Activated naive CD4-positive, alpha-beta T cell treated with anti-CD3 and anti-CD28 coated beads for 36 hours (primary cell): ENCODE measurements at regions of chr22 and their contacts with region 1.

Region 1: GRCh38 chr22:41381329-41382097 is at the start of gene TEF:
- DNase-seq: peak; percentile 98
- H3K4me3 Mint-ChIP-seq: peak within 1 kb of the TSS; percentile 87
- H3K27ac Mint-ChIP-seq: peak within 1 kb of the TSS; percentile 95
- H3K4me1 Mint-ChIP-seq: peaks cover 13% of the 10 kb centered on the region
- H3K27me3 Mint-ChIP-seq: no peaks in the 10 kb centered on the region
- total RNA-seq, gene TEF: 1.7 to 1.9 TPM

Region 2: DNA sequence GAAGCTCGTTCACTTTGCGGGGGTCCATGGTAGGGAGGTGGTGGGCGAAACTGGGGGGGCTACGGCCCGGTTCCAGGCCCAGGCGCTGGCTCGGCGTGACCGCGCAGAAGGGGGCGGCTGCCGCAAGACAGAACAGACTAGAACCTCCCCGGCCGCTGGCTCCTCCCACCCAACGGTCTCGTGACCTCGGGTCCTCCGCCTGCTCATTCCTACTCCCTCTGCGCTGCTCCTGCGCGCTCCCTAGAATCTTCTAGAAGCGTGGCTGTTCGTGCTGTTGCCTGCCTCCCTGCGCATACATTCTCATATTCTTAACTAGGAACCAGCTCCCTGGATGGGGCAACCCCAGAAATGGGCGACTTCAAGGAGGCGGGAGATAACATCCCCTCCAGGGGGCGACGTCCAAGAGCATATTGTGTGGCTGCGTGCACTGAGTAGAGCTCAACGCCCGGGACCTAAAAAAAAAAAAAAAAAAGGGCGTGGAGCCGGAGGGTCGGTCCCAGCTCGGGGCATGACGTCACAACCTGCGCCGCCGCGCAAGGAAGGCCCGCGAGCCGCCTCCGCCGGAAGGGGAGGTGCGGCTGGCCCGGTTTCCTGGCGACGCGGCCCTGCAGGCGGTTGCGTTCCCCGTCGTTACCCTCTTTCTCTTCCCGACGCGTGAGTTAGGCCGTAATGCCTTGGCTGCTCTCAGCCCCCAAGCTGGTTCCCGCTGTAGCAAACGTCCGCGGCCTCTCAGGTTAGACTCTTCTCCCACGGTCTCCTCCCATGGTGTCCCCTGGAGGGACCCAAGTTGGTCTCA is 524.8 kb before region 1 on chr22 and contains the starts of genes ST13 and XPNPEP3:
- CTCF ChIA-PET with region 1: no interaction called
- intact Hi-C with region 1: loop called (anchors 5 kb)
- DNase-seq: peak; percentile 98
- H3K4me3 Mint-ChIP-seq: peak within 1 kb of the TSS; percentile 95
- H3K27ac Mint-ChIP-seq: peak within 1 kb of the TSS; percentile 99
- H3K4me1 Mint-ChIP-seq: peaks cover 51% of the 10 kb centered on the region
- H3K27me3 Mint-ChIP-seq: no peaks in the 10 kb centered on the region
- total RNA-seq, gene ST13: 240 to 254 TPM
- total RNA-seq, gene XPNPEP3: 15.7 to 19.6 TPM

Region 3: GRCh38 chr22:41301105-41302020 is 80.2 kb before region 1 on chr22 and contains the start of gene ZC3H7B:
- CTCF ChIA-PET with region 1: interaction called, 3 read pairs
- intact Hi-C with region 1: loop called (anchors 5 kb)
- DNase-seq: peak; percentile 88
- H3K4me3 Mint-ChIP-seq: peak within 1 kb of the TSS; percentile 74
- H3K27ac Mint-ChIP-seq: peak within 1 kb of the TSS; percentile 76
- H3K4me1 Mint-ChIP-seq: peaks cover 37% of the 10 kb centered on the region
- H3K27me3 Mint-ChIP-seq: no peaks in the 10 kb centered on the region
- total RNA-seq, gene ZC3H7B: 30.0 to 30.3 TPM

Region 4: DNA sequence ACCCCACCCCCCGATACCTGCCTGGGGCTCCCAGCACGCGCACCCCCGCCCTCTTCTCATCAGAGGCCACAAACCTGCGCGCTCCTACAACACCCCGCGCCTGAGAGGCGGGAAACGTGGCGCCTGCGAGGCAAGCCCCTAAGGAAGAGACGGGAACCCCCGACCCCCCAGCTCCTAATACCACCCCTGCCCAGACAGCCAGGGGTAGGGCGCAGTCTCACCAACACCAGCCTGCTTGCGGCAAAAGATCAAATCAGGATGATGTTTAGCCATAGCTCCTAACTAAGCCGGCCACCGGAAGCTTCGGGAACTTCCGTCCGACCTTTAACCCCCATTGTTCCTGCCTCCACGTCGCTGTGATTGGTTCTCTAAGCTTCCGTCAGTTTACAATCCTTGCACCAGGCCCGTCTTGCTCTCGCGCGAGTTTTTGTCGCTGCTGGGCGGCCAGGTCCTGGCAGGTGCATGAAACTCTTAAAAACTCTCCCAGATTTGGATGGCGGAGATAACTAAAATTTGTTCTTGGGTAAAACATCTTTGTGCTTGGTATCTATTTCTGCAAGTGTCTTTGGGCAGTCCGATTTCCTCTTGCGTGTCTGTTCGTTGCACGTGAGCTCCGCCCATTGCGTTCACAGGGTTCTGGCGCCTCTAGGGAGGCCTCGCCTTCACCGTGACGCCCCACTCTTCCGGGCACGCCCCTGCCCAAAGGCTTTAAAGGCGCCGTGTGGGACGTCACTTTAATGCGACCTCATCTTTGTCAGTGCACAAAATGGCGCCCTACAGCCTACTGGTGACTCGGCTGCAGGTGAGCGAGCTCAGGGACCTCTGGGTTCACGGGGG is 87.1 kb after region 1 on chr22 and contains the starts of genes ACO2 and PHF5A:
- CTCF ChIA-PET with region 1: no interaction called
- intact Hi-C with region 1: loop called (anchors 1 kb)
- DNase-seq: peak; percentile 99
- H3K4me3 Mint-ChIP-seq: peak within 1 kb of the TSS; percentile 75
- H3K27ac Mint-ChIP-seq: peak within 1 kb of the TSS; percentile 96
- H3K4me1 Mint-ChIP-seq: peaks cover 62% of the 10 kb centered on the region
- H3K27me3 Mint-ChIP-seq: no peaks in the 10 kb centered on the region
- total RNA-seq, gene ACO2: 113 to 118 TPM
- total RNA-seq, gene PHF5A: 67.5 to 69.0 TPM

Region 5: GRCh38 chr22:41589391-41590241 is 208.1 kb after region 1 on chr22 and contains the start of gene PMM1:
- CTCF ChIA-PET with region 1: no interaction called
- intact Hi-C with region 1: loop called (anchors 1 kb)
- DNase-seq: peak; percentile 100
- H3K4me3 Mint-ChIP-seq: peak within 1 kb of the TSS; percentile 93
- H3K27ac Mint-ChIP-seq: peak within 1 kb of the TSS; percentile 84
- H3K4me1 Mint-ChIP-seq: peaks cover 12% of the 10 kb centered on the region
- H3K27me3 Mint-ChIP-seq: no peaks in the 10 kb centered on the region
- total RNA-seq, gene PMM1: 35.3 to 35.6 TPM